A673 (cell line): ENCODE measurements at regions of chr5 and their contacts with region 1.

Region 1: GRCh38 chr5:67209142-67209771 is 12.7 kb upstream of the CD180 start:
- DNase-seq: peak; percentile 89
- H3K4me3 ChIP-seq: no peak overlapping the region
- H3K27ac ChIP-seq: no peak overlapping the region
- H3K4me1 ChIP-seq: no peaks in the 10 kb centered on the region
- H3K27me3 ChIP-seq: no peaks in the 10 kb centered on the region
- CTCF ChIP-seq: peak; percentile 76

Region 2: DNA sequence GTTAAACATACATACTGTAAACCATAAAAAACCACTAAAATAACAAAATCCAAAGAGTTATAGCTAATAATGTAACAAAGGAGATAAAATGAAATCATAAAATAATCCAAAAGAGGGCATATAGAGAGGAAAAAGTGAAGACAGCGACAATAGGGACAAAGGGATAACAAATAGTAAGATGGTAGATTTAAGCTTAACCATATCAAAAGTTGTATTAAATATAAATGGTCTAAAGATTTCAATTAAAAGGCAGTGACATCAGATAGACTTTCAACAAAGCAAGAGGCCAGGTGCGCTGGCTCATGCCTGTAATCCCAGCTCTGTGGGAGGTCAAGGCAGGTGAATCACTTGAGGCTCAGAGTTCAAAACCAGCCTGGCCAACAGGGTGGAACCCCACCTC is 1119.9 kb before region 1 on chr5:
- CTCF ChIA-PET with region 1: no interaction called
- POLR2A ChIA-PET with region 1: no interaction called
- intact Hi-C with region 1: no loop called
- DNase-seq: no peak
- H3K4me3 ChIP-seq: no peak overlapping the region
- H3K27ac ChIP-seq: no peak overlapping the region
- H3K4me1 ChIP-seq: no peaks in the 10 kb centered on the region
- H3K27me3 ChIP-seq: no peaks in the 10 kb centered on the region
- CTCF ChIP-seq: no peak

Region 3: DNA sequence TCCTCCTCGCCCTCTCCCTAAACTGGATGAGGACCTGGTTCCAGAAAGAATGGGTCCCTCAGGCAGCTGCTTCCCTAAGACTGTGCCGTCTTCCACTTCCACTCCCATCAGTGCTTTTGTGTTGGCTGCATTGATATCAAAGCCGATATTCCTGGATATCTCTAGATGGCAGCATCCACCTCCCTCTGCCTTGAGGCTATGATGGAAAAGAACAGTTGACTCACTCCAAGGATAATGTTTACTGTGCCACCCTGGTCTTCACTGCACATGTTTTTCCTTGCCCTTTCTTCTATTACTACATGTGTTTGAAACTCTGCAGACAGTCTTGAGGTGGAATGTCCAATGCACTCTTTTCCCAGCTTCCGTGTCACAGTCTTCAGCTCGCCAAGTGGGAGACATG is 401.5 kb before region 1 on chr5:
- CTCF ChIA-PET with region 1: no interaction called
- POLR2A ChIA-PET with region 1: no interaction called
- intact Hi-C with region 1: loop called (anchors 5 kb)
- DNase-seq: peak; percentile 51
- H3K4me3 ChIP-seq: no peak overlapping the region
- H3K27ac ChIP-seq: no peak overlapping the region
- H3K4me1 ChIP-seq: no peaks in the 10 kb centered on the region
- H3K27me3 ChIP-seq: peaks cover 11% of the 10 kb centered on the region
- CTCF ChIP-seq: peak; percentile 50

Region 4: GRCh38 chr5:66987949-66988838 is 221.1 kb before region 1 on chr5:
- CTCF ChIA-PET with region 1: no interaction called
- POLR2A ChIA-PET with region 1: no interaction called
- intact Hi-C with region 1: loop called (anchors 1 kb)
- DNase-seq: peak; percentile 61
- H3K4me3 ChIP-seq: no peak overlapping the region
- H3K27ac ChIP-seq: no peak overlapping the region
- H3K4me1 ChIP-seq: no peaks in the 10 kb centered on the region
- H3K27me3 ChIP-seq: no peaks in the 10 kb centered on the region
- CTCF ChIP-seq: peak; percentile 77

Region 5: GRCh38 chr5:67156976-67157583 is 52.2 kb before region 1 on chr5:
- CTCF ChIA-PET with region 1: interaction called, 5 read pairs
- POLR2A ChIA-PET with region 1: no interaction called
- intact Hi-C with region 1: loop called (anchors 1 kb)
- DNase-seq: peak; percentile 56
- H3K4me3 ChIP-seq: no peak overlapping the region
- H3K27ac ChIP-seq: no peak overlapping the region
- H3K4me1 ChIP-seq: peaks cover 29% of the 10 kb centered on the region
- H3K27me3 ChIP-seq: no peaks in the 10 kb centered on the region
- CTCF ChIP-seq: peak; percentile 87